Thyroid gland (tissue), 4 donors: ENCODE measurements at regions of chr3 and their contacts with region 1.

Region 1: GRCh38 chr3:16290007-16290826 is 25.2 kb downstream of the OXNAD1 start:
- DNase-seq: peak; percentile 58 to 65
- H3K4me3 ChIP-seq: no peak overlapping the region
- H3K27ac ChIP-seq: peak overlapping the region in 1 of 3 donors; percentile 18
- H3K4me1 ChIP-seq: peaks cover 5 to 6% of the 10 kb centered on the region in 2 donors
- H3K27me3 ChIP-seq: no peaks in the 10 kb centered on the region
- CTCF ChIP-seq: peak; percentile 50 to 98 (median 82)
- POLR2A ChIP-seq: no peak

Region 2: GRCh38 chr3:16516695-16517481 is 226.7 kb after region 1 on chr3:
- intact Hi-C with region 1: loop called (anchors 5 kb)
- DNase-seq: peak; percentile 70 to 72
- H3K4me3 ChIP-seq: no peak overlapping the region
- H3K27ac ChIP-seq: peak overlapping the region; percentile 5 to 69 (median 61)
- H3K4me1 ChIP-seq: peaks cover 15 to 22% of the 10 kb centered on the region in 2 donors
- H3K27me3 ChIP-seq: no peaks in the 10 kb centered on the region
- CTCF ChIP-seq: peak in 5 of 6 experiments; percentile 45 to 88 (median 65)
- POLR2A ChIP-seq: no peak

Region 3: GRCh38 chr3:16550676-16551341 is 260.6 kb after region 1 on chr3:
- intact Hi-C with region 1: loop called (anchors 2 kb)
- DNase-seq: peak; percentile 61 to 69
- H3K4me3 ChIP-seq: no peak overlapping the region
- H3K27ac ChIP-seq: no peak overlapping the region
- H3K4me1 ChIP-seq: no peaks in the 10 kb centered on the region
- H3K27me3 ChIP-seq: no peaks in the 10 kb centered on the region
- CTCF ChIP-seq: peak; percentile 65 to 96 (median 90)
- POLR2A ChIP-seq: no peak